GM12878 (cell line): ENCODE measurements at regions of chr2 and their contacts with region 1.

Region 1: GRCh38 chr2:134118279-134119116 is 135.4 kb upstream of the MGAT5 start:
- DNase-seq: peak; percentile 96
- ATAC-seq: peak; percentile 62
- H3K4me3 ChIP-seq: peak overlapping the region; percentile 92
- H3K27ac ChIP-seq: peak overlapping the region; percentile 77
- H3K4me1 ChIP-seq: peaks cover 19% of the 10 kb centered on the region
- H3K27me3 ChIP-seq: no peaks in the 10 kb centered on the region
- CTCF ChIP-seq: peak; percentile 58 to 91 (median 80); a peak in 5 of 6 replicates
- EP300 ChIP-seq: peak; percentile 80 to 88
- POLR2A ChIP-seq: no peak
- RAD21 ChIP-seq: peak; percentile 99

Region 2: DNA sequence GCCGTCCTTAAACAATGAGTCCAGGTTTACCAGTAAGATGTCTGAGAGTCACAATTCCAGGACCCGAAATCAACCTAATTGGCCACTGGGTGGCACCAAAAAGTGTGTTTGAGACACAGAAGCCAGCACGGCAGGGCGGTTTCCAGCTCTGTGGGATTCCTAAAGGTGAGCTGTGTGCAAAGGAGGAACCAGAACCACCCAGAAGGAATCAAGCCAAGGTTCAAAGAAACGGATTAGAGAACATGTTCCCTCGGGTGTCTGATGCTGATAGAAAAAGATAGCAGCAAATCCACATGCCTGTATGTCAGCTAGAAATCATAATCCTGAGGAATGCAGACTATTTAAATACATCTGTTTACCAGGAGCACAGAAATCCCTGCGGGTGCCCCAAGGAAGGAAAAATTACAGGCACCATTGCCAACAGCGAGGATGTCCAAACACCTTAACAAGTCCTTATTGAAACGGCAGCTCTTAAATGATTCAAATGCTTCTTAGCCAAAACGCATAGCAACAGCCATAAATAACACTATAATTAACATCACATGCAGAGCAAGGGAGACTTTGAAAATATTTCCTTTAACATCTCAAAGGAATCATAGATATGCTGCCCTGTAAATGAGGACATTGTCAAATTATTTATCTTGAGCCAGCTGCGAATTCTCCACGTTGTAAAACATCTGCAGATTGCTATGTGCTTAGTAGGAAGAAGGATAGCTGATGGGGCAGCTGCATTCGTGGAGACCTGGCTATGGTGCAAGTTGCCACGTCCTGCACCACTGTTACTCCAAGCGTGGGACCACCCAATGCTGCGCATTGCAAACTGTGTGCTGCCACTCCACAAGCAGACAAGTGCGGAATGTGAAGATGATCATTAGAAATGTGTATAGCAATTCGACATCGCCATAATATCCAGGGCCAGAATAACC is 231.5 kb before region 1 on chr2:
- CTCF ChIA-PET with region 1: interaction called, 55 read pairs
- POLR2A ChIA-PET with region 1: no interaction called
- RAD21 ChIA-PET with region 1: interaction called, 17 read pairs
- SMC1A ChIA-PET with region 1: interaction called, 27 read pairs
- in situ Hi-C with region 1: no loop called
- intact Hi-C with region 1: loop called (anchors 2 kb)
- DNase-seq: peak; percentile 21
- ATAC-seq: peak; percentile 94
- H3K4me3 ChIP-seq: no peak overlapping the region
- H3K27ac ChIP-seq: no peak overlapping the region
- H3K4me1 ChIP-seq: no peaks in the 10 kb centered on the region
- H3K27me3 ChIP-seq: no peaks in the 10 kb centered on the region; a peak in 2 of 4 replicates
- CTCF ChIP-seq: peak; percentile 57 to 76 (median 70); a peak in 5 of 6 replicates
- EP300 ChIP-seq: no peak
- POLR2A ChIP-seq: no peak
- RAD21 ChIP-seq: peak; percentile 84

Region 3: DNA sequence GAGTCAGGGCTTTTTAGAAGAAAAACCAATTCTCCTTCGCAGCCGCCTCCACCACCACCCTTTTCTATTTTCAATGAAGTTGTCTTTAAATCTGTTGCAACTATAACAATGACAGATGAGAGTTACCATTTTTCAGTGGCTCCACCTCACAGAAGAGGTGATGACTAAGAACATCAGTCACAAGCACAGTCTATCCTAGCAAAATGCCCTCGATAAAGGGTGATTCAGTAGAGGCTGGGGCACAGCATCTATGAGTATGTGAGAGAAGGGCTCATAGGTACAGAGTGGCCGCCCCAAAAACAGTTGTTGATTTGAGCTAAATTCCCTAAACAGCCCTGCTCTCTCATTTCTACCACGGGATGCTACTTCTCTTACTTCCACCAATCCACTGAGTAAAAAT is 175.4 kb before region 1 on chr2:
- CTCF ChIA-PET with region 1: no interaction called
- POLR2A ChIA-PET with region 1: no interaction called
- RAD21 ChIA-PET with region 1: no interaction called
- SMC1A ChIA-PET with region 1: no interaction called
- in situ Hi-C with region 1: no loop called
- intact Hi-C with region 1: no loop called
- DNase-seq: no peak
- ATAC-seq: no peak
- H3K4me3 ChIP-seq: no peak overlapping the region
- H3K27ac ChIP-seq: no peak overlapping the region
- H3K4me1 ChIP-seq: no peaks in the 10 kb centered on the region
- H3K27me3 ChIP-seq: no peaks in the 10 kb centered on the region
- CTCF ChIP-seq: no peak
- EP300 ChIP-seq: no peak
- POLR2A ChIP-seq: no peak
- RAD21 ChIP-seq: no peak

Region 4: DNA sequence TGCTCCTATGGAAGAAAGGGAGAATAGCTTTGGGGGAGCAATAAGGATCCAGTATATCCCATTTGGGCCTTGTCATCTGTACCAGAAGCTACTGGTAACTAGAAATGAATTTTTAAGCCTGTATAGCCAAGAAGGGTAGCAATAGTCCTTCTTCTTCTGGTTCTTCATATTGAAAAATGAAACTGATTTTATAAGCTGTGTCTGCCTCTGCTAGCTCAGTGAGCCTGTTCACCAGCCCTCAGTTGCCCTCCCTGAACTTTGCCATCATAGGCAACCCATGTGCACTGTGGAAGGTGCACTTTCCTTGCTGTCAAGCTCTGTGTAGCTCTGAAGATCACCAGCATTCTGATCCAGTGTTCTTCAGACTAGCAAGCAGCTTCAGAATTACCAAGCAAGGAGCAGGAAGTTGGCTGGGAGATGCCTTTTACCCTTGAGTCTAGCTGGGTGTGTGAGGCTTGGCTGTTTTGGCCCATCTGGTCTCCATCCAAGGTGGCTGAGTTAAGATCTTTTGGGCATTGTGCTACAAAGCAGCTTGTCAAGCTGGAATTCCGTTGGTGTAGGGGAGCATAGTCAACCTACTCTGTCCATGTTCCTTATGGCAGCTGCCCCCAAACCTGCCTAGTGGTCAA is 79.6 kb after region 1 on chr2:
- CTCF ChIA-PET with region 1: interaction called, 164 read pairs
- POLR2A ChIA-PET with region 1: interaction called, 3 read pairs
- RAD21 ChIA-PET with region 1: interaction called, 12 read pairs
- SMC1A ChIA-PET with region 1: interaction called, 8 read pairs
- in situ Hi-C with region 1: no loop called
- intact Hi-C with region 1: no loop called
- DNase-seq: no peak
- ATAC-seq: peak; percentile 62
- H3K4me3 ChIP-seq: no peak overlapping the region
- H3K27ac ChIP-seq: peak overlapping the region; percentile 52
- H3K4me1 ChIP-seq: peaks cover 31% of the 10 kb centered on the region
- H3K27me3 ChIP-seq: no peaks in the 10 kb centered on the region
- CTCF ChIP-seq: no peak
- EP300 ChIP-seq: no peak
- POLR2A ChIP-seq: no peak
- RAD21 ChIP-seq: no peak

Region 5: GRCh38 chr2:134232868-134233727 is 114.6 kb after region 1 on chr2:
- CTCF ChIA-PET with region 1: interaction called, 12 read pairs
- POLR2A ChIA-PET with region 1: interaction called, 3 read pairs
- RAD21 ChIA-PET with region 1: interaction called, 14 read pairs
- SMC1A ChIA-PET with region 1: interaction called, 17 read pairs
- in situ Hi-C with region 1: no loop called
- intact Hi-C with region 1: loop called (anchors 5 kb)
- DNase-seq: no peak
- ATAC-seq: peak; percentile 59
- H3K4me3 ChIP-seq: peak overlapping the region; percentile 19
- H3K27ac ChIP-seq: peak overlapping the region; percentile 83
- H3K4me1 ChIP-seq: peaks cover 72% of the 10 kb centered on the region
- H3K27me3 ChIP-seq: no peaks in the 10 kb centered on the region
- CTCF ChIP-seq: 0 out of 6 replicates have a peak, but pooled peaks of 2 of the 3 experiments have one; percentile 6 to 17
- EP300 ChIP-seq: 0 out of 4 replicates have a peak, but pooled peaks have one; percentile 4 to 22
- POLR2A ChIP-seq: no peak
- RAD21 ChIP-seq: no peak

Region 6: GRCh38 chr2:134268265-134268664 is 149.8 kb after region 1 on chr2:
- CTCF ChIA-PET with region 1: interaction called, 11 read pairs
- POLR2A ChIA-PET with region 1: no interaction called
- RAD21 ChIA-PET with region 1: interaction called, 15 read pairs
- SMC1A ChIA-PET with region 1: interaction called, 30 read pairs
- in situ Hi-C with region 1: no loop called
- intact Hi-C with region 1: no loop called
- DNase-seq: no peak
- ATAC-seq: no peak
- H3K4me3 ChIP-seq: no peak overlapping the region
- H3K27ac ChIP-seq: no peak overlapping the region
- H3K4me1 ChIP-seq: peaks cover 29% of the 10 kb centered on the region
- H3K27me3 ChIP-seq: no peaks in the 10 kb centered on the region
- CTCF ChIP-seq: no peak
- EP300 ChIP-seq: no peak
- POLR2A ChIP-seq: no peak
- RAD21 ChIP-seq: no peak

Region 7: GRCh38 chr2:134336352-134336751 is 217.9 kb after region 1 on chr2:
- CTCF ChIA-PET with region 1: no interaction called
- POLR2A ChIA-PET with region 1: no interaction called
- RAD21 ChIA-PET with region 1: interaction called, 6 read pairs
- SMC1A ChIA-PET with region 1: interaction called, 3 read pairs
- in situ Hi-C with region 1: no loop called
- intact Hi-C with region 1: loop called (anchors 2 kb)
- DNase-seq: peak; percentile 53
- ATAC-seq: peak; percentile 96
- H3K4me3 ChIP-seq: no peak overlapping the region
- H3K27ac ChIP-seq: peak overlapping the region; percentile 48
- H3K4me1 ChIP-seq: peaks cover 25% of the 10 kb centered on the region
- H3K27me3 ChIP-seq: no peaks in the 10 kb centered on the region
- CTCF ChIP-seq: no peak
- EP300 ChIP-seq: peak in 1 of 2 experiments; percentile 67; a peak in 1 of 4 replicates
- POLR2A ChIP-seq: no peak
- RAD21 ChIP-seq: no peak

Region 8: GRCh38 chr2:134420259-134420658 is 301.8 kb after region 1 on chr2:
- CTCF ChIA-PET with region 1: interaction called, 320 read pairs
- POLR2A ChIA-PET with region 1: no interaction called
- RAD21 ChIA-PET with region 1: interaction called, 4 read pairs
- SMC1A ChIA-PET with region 1: interaction called, 8 read pairs
- in situ Hi-C with region 1: no loop called
- intact Hi-C with region 1: no loop called
- DNase-seq: no peak
- ATAC-seq: no peak
- H3K4me3 ChIP-seq: no peak overlapping the region
- H3K27ac ChIP-seq: no peak overlapping the region
- H3K4me1 ChIP-seq: no peaks in the 10 kb centered on the region
- H3K27me3 ChIP-seq: no peaks in the 10 kb centered on the region
- CTCF ChIP-seq: no peak
- EP300 ChIP-seq: no peak
- POLR2A ChIP-seq: no peak
- RAD21 ChIP-seq: no peak